Naive thymus-derived CD4-positive, alpha-beta T cell (primary cell): ENCODE measurements at regions of chr2 and their contacts with region 1.

Region 1: DNA sequence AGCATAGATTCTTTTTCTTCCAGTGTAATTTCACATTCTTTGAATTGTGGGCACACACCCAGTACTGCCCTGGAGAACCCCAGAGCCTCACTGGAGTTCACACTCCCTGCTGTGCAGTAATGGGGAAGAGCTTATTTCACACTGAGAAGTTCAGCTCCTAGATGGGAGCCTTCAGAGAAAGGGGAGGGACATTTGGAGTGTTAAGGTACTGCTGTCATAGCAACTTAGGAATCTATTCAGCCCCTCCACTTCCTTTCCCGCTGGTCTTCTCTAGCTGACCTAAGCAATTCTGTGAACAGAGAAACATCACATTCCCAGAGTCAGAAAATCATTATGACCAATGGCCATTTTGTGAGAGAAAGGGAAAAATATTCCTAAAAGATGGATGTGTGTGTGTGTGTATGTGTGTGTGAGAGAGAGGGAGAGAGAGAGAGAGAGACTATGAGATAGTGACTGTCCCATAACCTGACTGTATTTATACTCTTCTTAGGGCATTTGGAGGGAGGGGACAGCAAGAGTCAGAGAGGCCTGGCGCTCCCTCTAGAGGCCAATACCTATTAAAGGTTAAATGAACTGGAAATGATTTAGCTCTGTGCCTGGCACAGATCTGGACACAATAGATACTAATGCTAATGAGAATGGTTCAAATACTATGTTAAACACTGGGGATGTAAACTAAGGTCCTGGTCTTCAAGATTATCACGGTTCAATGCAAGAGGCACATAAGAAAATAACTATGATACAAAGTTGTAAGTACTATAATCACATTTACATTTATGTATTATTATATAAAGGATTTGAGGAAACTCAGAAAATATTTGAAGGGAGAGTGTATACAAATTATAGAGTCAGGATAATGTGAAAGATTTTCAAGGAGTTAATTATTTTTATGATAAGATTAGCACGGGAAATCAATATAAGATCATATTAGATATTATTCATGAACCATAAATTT is 41.5 kb upstream of the RPE start:
- DNase-seq: peak in 5 of 9 donors; percentile 13 to 30 (median 22)
- ATAC-seq: peak; percentile 77
- H3K4me3 ChIP-seq: no peak overlapping the region
- H3K4me3 Mint-ChIP-seq: no peak overlapping the region
- H3K27ac ChIP-seq: no peak overlapping the region
- H3K27ac Mint-ChIP-seq: no peak overlapping the region
- H3K4me1 ChIP-seq: no peaks in the 10 kb centered on the region
- H3K4me1 Mint-ChIP-seq: no peaks in the 10 kb centered on the region
- H3K27me3 ChIP-seq: no peaks in the 10 kb centered on the region
- H3K27me3 Mint-ChIP-seq: peaks cover 0 to 18% (median 0%) of the 10 kb centered on the region in 5 donors

Region 2: DNA sequence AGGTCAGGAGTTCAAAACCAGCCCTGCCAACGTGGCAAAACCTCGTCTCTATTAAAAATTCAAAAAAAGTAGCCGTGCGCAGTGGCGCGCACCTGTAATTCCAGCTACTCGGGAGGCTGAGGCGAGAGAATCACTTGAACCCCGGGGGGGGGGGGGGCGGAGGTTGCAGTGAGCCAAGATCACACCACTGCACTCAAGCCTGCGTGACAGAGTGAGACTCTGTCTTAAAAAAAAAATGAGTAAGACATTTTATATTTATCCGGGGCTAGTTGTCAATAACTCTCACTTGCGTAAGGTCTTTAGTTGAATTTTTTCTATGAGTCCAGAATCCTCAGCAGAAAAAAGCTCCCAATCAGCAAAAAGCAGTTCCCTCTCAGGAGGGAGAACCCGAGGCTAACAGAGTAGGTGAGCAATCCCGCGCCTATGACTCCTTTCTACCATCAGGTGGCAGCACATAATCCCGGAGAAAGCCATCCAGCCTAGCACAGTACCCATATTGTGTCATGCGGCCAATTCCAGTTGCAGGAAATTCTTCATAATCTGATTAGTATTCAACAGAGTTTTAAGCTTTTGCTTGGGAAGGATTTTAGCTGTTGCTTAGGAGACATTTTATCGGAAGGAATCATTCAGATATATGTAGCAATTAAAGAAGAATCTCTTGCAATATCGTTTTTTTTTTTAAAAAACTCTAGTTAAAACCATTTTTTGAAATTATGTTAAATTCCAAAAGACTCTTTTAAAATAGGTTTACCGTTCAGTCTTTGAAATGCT is 1785.7 kb before region 1 on chr2:
- CTCF ChIA-PET with region 1: no interaction called
- POLR2A ChIA-PET with region 1: no interaction called
- intact Hi-C with region 1: loop called in 1 of 2 experiments (anchors 2 kb)
- DNase-seq: peak; percentile 7 to 59 (median 45)
- ATAC-seq: peak; percentile 93
- H3K4me3 ChIP-seq: no peak overlapping the region
- H3K4me3 Mint-ChIP-seq: no peak overlapping the region
- H3K27ac ChIP-seq: no peak overlapping the region
- H3K27ac Mint-ChIP-seq: no peak overlapping the region
- H3K4me1 ChIP-seq: no peaks in the 10 kb centered on the region
- H3K4me1 Mint-ChIP-seq: peaks cover 0 to 6% (median 4%) of the 10 kb centered on the region in 7 donors
- H3K27me3 ChIP-seq: no peaks in the 10 kb centered on the region
- H3K27me3 Mint-ChIP-seq: peaks cover 2 to 20% (median 11%) of the 10 kb centered on the region in 5 donors

Region 3: DNA sequence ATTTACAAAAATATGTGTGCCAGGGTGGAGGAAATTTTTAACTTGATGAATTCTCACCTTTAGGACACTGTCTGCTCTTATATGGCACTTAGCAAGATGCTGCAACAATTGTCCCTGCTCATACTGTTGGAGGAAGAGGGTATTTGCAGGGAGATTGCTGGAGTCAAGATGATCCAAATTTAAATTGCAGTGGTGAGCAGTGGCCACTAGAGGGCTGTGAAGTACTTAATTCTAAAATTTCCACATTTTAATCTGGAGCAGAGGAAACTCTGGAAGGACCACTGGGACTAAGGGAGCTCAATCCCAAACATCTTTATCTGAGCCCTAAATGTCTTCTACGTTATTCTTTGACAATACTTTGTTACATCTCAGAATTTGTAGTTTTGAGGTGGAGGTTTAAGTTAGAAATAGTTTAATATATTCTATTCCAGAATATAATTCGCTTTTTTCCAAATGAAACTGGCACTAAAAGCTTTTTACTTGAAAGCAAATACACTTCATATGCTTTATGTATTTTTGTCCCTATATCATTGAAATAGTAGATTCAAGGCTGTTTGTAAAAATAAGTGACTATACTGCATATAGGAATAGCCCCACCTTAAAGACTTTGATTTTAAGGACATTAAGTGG is 1587.4 kb before region 1 on chr2:
- CTCF ChIA-PET with region 1: no interaction called
- POLR2A ChIA-PET with region 1: no interaction called
- intact Hi-C with region 1: loop called in 1 of 2 experiments (anchors 1 kb)
- DNase-seq: peak in 3 of 9 donors; percentile 15 to 22 (median 19)
- ATAC-seq: peak; percentile 66
- H3K4me3 ChIP-seq: no peak overlapping the region
- H3K4me3 Mint-ChIP-seq: no peak overlapping the region
- H3K27ac ChIP-seq: no peak overlapping the region
- H3K27ac Mint-ChIP-seq: no peak overlapping the region
- H3K4me1 ChIP-seq: no peaks in the 10 kb centered on the region
- H3K4me1 Mint-ChIP-seq: no peaks in the 10 kb centered on the region
- H3K27me3 ChIP-seq: peaks cover 0 to 2% of the 10 kb centered on the region in 2 donors
- H3K27me3 Mint-ChIP-seq: peaks cover under 1 to 15% (median 4%) of the 10 kb centered on the region in 5 donors

Region 4: GRCh38 chr2:208392300-208393080 is 1568.5 kb before region 1 on chr2:
- CTCF ChIA-PET with region 1: no interaction called
- POLR2A ChIA-PET with region 1: no interaction called
- intact Hi-C with region 1: loop called in 1 of 2 experiments (anchors 1 kb)
- DNase-seq: no peak
- ATAC-seq: no peak
- H3K4me3 ChIP-seq: no peak overlapping the region
- H3K4me3 Mint-ChIP-seq: no peak overlapping the region
- H3K27ac ChIP-seq: no peak overlapping the region
- H3K27ac Mint-ChIP-seq: no peak overlapping the region
- H3K4me1 ChIP-seq: no peaks in the 10 kb centered on the region
- H3K4me1 Mint-ChIP-seq: no peaks in the 10 kb centered on the region
- H3K27me3 ChIP-seq: no peaks in the 10 kb centered on the region
- H3K27me3 Mint-ChIP-seq: peaks cover 5 to 22% (median 11%) of the 10 kb centered on the region in 5 donors

Region 5: GRCh38 chr2:209334198-209335017 is 626.5 kb before region 1 on chr2:
- CTCF ChIA-PET with region 1: no interaction called
- POLR2A ChIA-PET with region 1: no interaction called
- intact Hi-C with region 1: loop called in 1 of 2 experiments (anchors 5 kb)
- DNase-seq: peak in 5 of 9 donors; percentile 0 to 23 (median 9)
- ATAC-seq: peak; percentile 29
- H3K4me3 ChIP-seq: no peak overlapping the region
- H3K4me3 Mint-ChIP-seq: no peak overlapping the region
- H3K27ac ChIP-seq: no peak overlapping the region
- H3K27ac Mint-ChIP-seq: no peak overlapping the region
- H3K4me1 ChIP-seq: no peaks in the 10 kb centered on the region
- H3K4me1 Mint-ChIP-seq: no peaks in the 10 kb centered on the region
- H3K27me3 ChIP-seq: no peaks in the 10 kb centered on the region
- H3K27me3 Mint-ChIP-seq: peaks cover 0 to 7% (median 3%) of the 10 kb centered on the region in 5 donors

Region 6: DNA sequence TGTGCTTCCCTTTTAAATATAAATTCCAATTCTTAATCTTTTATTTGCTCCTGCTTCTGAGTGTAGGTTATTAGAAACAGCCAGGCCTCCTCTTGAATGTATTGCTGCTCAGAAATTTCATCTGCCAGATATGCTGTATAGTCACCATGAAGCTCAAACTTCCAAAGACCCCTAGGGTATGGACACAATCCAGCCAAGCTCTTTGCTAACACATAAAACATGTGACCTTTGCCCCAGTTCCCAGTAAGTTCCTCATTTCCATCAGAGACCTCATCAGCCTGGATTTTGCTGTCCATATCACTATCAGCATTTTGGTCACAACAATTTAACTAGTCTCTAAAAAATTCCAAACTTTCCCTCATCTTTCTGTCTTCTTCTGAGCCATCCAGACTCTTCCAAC is 461.9 kb before region 1 on chr2:
- CTCF ChIA-PET with region 1: no interaction called
- POLR2A ChIA-PET with region 1: no interaction called
- intact Hi-C with region 1: no loop called
- DNase-seq: no peak
- ATAC-seq: no peak
- H3K4me3 ChIP-seq: no peak overlapping the region
- H3K4me3 Mint-ChIP-seq: no peak overlapping the region
- H3K27ac ChIP-seq: no peak overlapping the region
- H3K27ac Mint-ChIP-seq: no peak overlapping the region
- H3K4me1 ChIP-seq: no peaks in the 10 kb centered on the region
- H3K4me1 Mint-ChIP-seq: no peaks in the 10 kb centered on the region
- H3K27me3 ChIP-seq: no peaks in the 10 kb centered on the region
- H3K27me3 Mint-ChIP-seq: no peaks in the 10 kb centered on the region

Region 7: DNA sequence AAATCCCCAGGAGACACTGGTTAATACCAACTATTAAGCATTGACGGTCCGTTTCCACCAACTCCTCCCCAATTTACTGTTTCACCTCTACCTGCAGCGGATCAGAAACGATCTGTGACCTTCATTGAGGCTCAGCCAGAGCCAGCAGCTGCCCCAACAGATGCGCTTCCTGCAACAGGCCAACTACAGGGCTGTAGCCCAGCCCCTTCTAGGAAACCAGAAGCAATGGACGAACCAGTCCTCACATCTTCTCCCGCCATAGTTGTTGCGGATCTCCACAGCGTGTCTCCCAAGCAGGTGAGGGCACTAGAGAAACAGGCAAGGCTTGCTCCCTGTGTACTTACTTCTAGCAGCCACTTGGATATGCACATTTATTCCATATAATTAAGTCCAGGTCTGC is 33.0 kb after region 1 on chr2:
- CTCF ChIA-PET with region 1: no interaction called
- POLR2A ChIA-PET with region 1: no interaction called
- intact Hi-C with region 1: no loop called
- DNase-seq: no peak
- ATAC-seq: no peak
- H3K4me3 ChIP-seq: no peak overlapping the region
- H3K4me3 Mint-ChIP-seq: no peak overlapping the region
- H3K27ac ChIP-seq: no peak overlapping the region
- H3K27ac Mint-ChIP-seq: no peak overlapping the region
- H3K4me1 ChIP-seq: no peaks in the 10 kb centered on the region
- H3K4me1 Mint-ChIP-seq: peaks cover 0 to 9% (median 0%) of the 10 kb centered on the region in 7 donors
- H3K27me3 ChIP-seq: no peaks in the 10 kb centered on the region
- H3K27me3 Mint-ChIP-seq: peaks cover 0 to 13% (median 10%) of the 10 kb centered on the region in 5 donors